ENCODE measurements at regions of chr11 and their contacts with region 1.

Region 1: GRCh38 chr11:124961972-124962609 is 8.1 kb downstream of the CCDC15 start:
- DNase-seq: no peak
- H3K4me3 ChIP-seq: no peak overlapping the region
- H3K27ac ChIP-seq: no peak overlapping the region
- H3K4me1 ChIP-seq: no peaks in the 10 kb centered on the region
- H3K27me3 ChIP-seq: no peaks in the 10 kb centered on the region
- CTCF ChIP-seq: peak; percentile 78

Region 2: GRCh38 chr11:125138966-125139365 is 176.9 kb after region 1 on chr11:
- intact Hi-C with region 1: loop called (anchors 5 kb)
- DNase-seq: no peak
- H3K4me3 ChIP-seq: no peak overlapping the region
- H3K27ac ChIP-seq: no peak overlapping the region
- H3K4me1 ChIP-seq: peaks cover 5% of the 10 kb centered on the region
- H3K27me3 ChIP-seq: peaks cover 58% of the 10 kb centered on the region
- CTCF ChIP-seq: no peak

Region 3: DNA sequence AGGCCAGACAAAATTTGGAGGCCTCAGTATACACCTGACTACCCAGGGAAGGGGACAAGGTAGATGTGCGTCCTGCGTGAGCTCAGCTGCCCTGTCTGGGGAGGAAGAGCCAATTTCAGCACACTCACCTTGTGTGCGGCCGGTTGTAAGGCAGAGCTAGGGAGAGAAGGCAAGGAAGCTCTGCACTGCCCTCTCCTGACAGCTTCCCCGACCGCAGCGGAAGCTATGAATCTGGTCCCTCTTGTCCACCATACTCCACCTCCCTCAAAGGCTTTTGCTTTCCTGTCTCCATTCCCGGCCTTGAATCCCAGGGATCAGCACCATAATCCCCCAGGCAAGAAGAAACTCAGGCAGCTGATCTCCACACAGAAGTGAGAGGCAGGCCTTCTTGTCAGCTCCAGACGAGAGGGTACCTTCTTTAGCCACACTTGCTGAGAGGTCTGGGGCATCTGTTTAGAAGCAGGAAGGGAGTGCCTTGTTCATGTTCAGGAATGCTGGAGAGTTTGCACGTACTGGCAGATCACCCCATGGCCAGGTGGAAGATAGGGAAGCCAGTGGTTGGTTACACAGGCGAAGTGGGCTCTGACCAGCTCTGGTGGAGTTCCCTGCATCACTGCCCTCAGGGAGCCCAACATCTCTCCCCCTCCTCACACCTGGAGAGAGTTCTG is 471.5 kb after region 1 on chr11:
- intact Hi-C with region 1: loop called (anchors 10 kb)
- DNase-seq: peak; percentile 36
- H3K4me3 ChIP-seq: no peak overlapping the region
- H3K27ac ChIP-seq: no peak overlapping the region
- H3K4me1 ChIP-seq: peaks cover 27% of the 10 kb centered on the region
- H3K27me3 ChIP-seq: no peaks in the 10 kb centered on the region
- CTCF ChIP-seq: peak; percentile 71